ENCODE measurements at regions of chr6 and their contacts with region 1.

Region 1: GRCh38 chr6:135411339-135411738 is 86.2 kb downstream of the AHI1 start:
- DNase-seq: no peak
- ATAC-seq: no peak
- H3K4me3 ChIP-seq: no peak overlapping the region
- H3K27ac ChIP-seq: no peak overlapping the region
- H3K4me1 ChIP-seq: no peaks in the 10 kb centered on the region
- H3K27me3 ChIP-seq: no peaks in the 10 kb centered on the region
- CTCF ChIP-seq: peak; percentile 20 to 36 (median 24); a peak in 4 of 6 replicates
- EP300 ChIP-seq: no peak
- POLR2A ChIP-seq: no peak
- RAD21 ChIP-seq: peak; percentile 34; the same call in 1 of the 2 replicates

Region 2: DNA sequence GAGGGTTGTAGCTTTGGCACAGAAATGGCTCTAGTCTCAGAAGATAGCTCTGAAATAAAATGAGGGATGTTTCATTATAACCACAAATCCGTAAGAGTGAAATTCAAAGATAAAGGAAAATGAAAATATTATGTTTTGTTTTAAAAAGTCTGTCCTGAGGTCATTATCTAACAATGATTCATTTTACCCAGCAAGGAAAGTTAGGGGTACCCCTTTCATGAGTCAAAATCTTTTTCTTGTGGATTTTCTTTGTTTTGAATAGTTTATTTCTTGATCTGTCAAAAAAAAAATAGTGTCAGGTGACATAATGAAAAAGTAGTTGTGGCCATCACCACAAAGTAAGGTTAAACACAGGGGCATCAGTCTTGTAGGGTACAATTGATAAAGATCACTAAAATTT is 289.9 kb before region 1 on chr6:
- CTCF ChIA-PET with region 1: no interaction called
- POLR2A ChIA-PET with region 1: no interaction called
- RAD21 ChIA-PET with region 1: no interaction called
- SMC1A ChIA-PET with region 1: no interaction called
- in situ Hi-C with region 1: no loop called
- intact Hi-C with region 1: no loop called
- DNase-seq: no peak
- ATAC-seq: no peak
- H3K4me3 ChIP-seq: no peak overlapping the region
- H3K27ac ChIP-seq: no peak overlapping the region
- H3K4me1 ChIP-seq: peaks cover 16% of the 10 kb centered on the region
- H3K27me3 ChIP-seq: no peaks in the 10 kb centered on the region
- CTCF ChIP-seq: no peak
- EP300 ChIP-seq: no peak
- POLR2A ChIP-seq: no peak
- RAD21 ChIP-seq: no peak

Region 3: DNA sequence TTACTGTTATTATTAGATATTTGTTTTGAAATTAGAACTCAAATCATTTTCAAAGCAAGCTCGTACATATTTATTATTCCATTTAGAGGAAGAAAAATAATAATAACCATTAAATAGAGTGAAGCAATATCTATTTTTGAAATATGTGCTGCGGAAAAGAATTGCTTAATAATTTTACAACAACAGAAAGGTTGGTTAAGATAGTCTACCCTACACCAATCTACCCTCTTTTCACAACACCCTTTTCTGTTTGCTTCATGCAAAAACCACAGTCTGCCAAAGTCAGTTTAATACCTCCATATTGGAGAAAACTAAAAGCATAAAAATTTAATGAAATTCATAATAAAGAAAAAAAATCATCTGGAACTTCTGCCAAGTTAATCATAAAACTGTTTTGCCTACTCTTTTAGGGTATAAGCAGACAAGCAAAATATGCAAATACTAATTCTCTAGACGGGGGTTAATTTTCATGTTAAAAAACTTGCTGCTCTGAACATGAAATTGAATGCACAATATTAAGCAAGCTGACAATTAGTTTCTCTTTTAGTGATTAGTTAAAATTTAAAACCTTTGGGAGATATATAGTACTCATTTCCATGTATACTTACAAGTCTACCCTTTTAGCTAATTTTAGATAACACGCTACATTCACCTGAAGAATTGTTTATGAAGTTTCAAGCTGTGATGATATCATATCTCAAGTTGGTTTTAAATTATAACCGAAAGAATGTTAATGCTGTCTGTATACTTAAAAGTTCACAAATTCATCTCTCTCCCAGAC is 14.0 kb before region 1 on chr6:
- CTCF ChIA-PET with region 1: interaction called, 6 read pairs
- POLR2A ChIA-PET with region 1: no interaction called
- RAD21 ChIA-PET with region 1: interaction called, 4 read pairs
- SMC1A ChIA-PET with region 1: interaction called, 20 read pairs
- in situ Hi-C with region 1: no loop called
- intact Hi-C with region 1: no loop called
- DNase-seq: no peak
- ATAC-seq: no peak
- H3K4me3 ChIP-seq: no peak overlapping the region
- H3K27ac ChIP-seq: no peak overlapping the region
- H3K4me1 ChIP-seq: no peaks in the 10 kb centered on the region
- H3K27me3 ChIP-seq: no peaks in the 10 kb centered on the region
- CTCF ChIP-seq: no peak
- EP300 ChIP-seq: no peak
- POLR2A ChIP-seq: no peak
- RAD21 ChIP-seq: no peak